ENCODE measurements at regions of chr21 and their contacts with region 1.

Region 1: DNA sequence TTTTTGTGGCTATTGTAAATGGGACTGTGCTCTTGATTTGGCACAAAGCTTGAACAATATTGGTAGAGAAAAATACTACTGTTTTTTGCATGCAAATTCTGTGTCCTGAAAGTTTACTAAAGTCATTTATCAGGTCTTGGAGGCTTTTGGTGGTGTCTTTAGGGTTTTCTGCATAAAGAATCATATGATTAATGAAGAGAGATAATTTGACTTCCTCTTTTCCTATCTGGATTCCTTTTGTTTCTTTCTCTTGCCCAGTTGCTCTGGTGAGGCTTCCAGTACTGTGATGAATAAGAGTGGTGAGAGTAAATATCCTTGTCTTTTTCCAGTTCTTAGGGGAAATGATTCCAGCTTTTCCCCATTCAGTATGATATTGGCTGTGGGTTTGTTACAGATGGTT is 1166.7 kb downstream of the NCAM2 start:
- DNase-seq: no peak
- ATAC-seq: no peak
- H3K4me3 ChIP-seq: no peak overlapping the region
- H3K27ac ChIP-seq: no peak overlapping the region
- H3K4me1 ChIP-seq: no peaks in the 10 kb centered on the region
- H3K27me3 ChIP-seq: no peaks in the 10 kb centered on the region
- CTCF ChIP-seq: no peak

Region 2: GRCh38 chr21:21712748-21713520 is 452.0 kb before region 1 on chr21:
- CTCF ChIA-PET with region 1: no interaction called
- POLR2A ChIA-PET with region 1: no interaction called
- intact Hi-C with region 1: no loop called
- DNase-seq: no peak
- ATAC-seq: no peak
- H3K4me3 ChIP-seq: no peak overlapping the region
- H3K27ac ChIP-seq: no peak overlapping the region
- H3K4me1 ChIP-seq: no peaks in the 10 kb centered on the region
- H3K27me3 ChIP-seq: no peaks in the 10 kb centered on the region
- CTCF ChIP-seq: no peak

Region 3: DNA sequence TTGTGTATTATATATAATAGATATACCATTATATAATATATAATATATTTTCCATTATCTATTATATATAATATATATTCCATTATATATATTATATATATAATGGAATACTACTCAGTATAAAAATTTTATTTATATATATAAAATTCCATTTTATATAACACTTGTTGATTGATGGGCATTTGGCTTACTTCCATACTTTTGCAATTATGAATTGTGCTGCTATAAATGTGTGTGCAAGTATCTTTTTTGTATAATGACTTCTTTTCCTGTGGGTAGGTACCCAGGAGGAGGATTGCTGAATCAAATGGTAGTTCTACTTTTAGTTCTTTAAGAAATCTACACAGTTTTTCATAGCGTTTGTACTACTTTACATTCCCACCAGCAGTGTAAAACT is 44.4 kb after region 1 on chr21:
- CTCF ChIA-PET with region 1: interaction called, 15 read pairs
- POLR2A ChIA-PET with region 1: no interaction called
- intact Hi-C with region 1: no loop called
- DNase-seq: no peak
- ATAC-seq: no peak
- H3K4me3 ChIP-seq: no peak overlapping the region
- H3K27ac ChIP-seq: no peak overlapping the region
- H3K4me1 ChIP-seq: no peaks in the 10 kb centered on the region
- H3K27me3 ChIP-seq: no peaks in the 10 kb centered on the region
- CTCF ChIP-seq: no peak

Region 4: GRCh38 chr21:22278376-22278775 is 113.5 kb after region 1 on chr21:
- CTCF ChIA-PET with region 1: no interaction called
- POLR2A ChIA-PET with region 1: no interaction called
- intact Hi-C with region 1: no loop called
- DNase-seq: peak; percentile 51
- ATAC-seq: no peak
- H3K4me3 ChIP-seq: no peak overlapping the region
- H3K27ac ChIP-seq: no peak overlapping the region
- H3K4me1 ChIP-seq: no peaks in the 10 kb centered on the region
- H3K27me3 ChIP-seq: no peaks in the 10 kb centered on the region
- CTCF ChIP-seq: no peak

Region 5: GRCh38 chr21:22300657-22301056 is 135.7 kb after region 1 on chr21:
- CTCF ChIA-PET with region 1: no interaction called
- POLR2A ChIA-PET with region 1: no interaction called
- intact Hi-C with region 1: no loop called
- DNase-seq: peak; percentile 22
- ATAC-seq: peak; percentile 65
- H3K4me3 ChIP-seq: no peak overlapping the region
- H3K27ac ChIP-seq: peak overlapping the region; percentile 25; the same call in 1 of the 2 replicates
- H3K4me1 ChIP-seq: 0 out of 2 replicates have a peak, but pooled peaks cover 4% of the 10 kb centered on the region
- H3K27me3 ChIP-seq: no peaks in the 10 kb centered on the region
- CTCF ChIP-seq: no peak

Region 6: GRCh38 chr21:22363504-22363903 is 198.6 kb after region 1 on chr21:
- CTCF ChIA-PET with region 1: no interaction called
- POLR2A ChIA-PET with region 1: no interaction called
- intact Hi-C with region 1: no loop called
- DNase-seq: no peak
- ATAC-seq: no peak
- H3K4me3 ChIP-seq: no peak overlapping the region
- H3K27ac ChIP-seq: no peak overlapping the region
- H3K4me1 ChIP-seq: no peaks in the 10 kb centered on the region
- H3K27me3 ChIP-seq: no peaks in the 10 kb centered on the region
- CTCF ChIP-seq: no peak